Activated CD4-positive, alpha-beta T cell treated with anti-CD3 and anti-CD28 coated beads, Interleukin-2, amount 10 ng/mL, durations not matched to agents 24 days and 14 days (primary cell): ENCODE measurements at regions of chr5 and their contacts with region 1.

Region 1: GRCh38 chr5:63963080-63963735 is 963 bp upstream of the HTR1A start:
- DNase-seq: peak; percentile 82
- H3K4me3 Mint-ChIP-seq: no peak overlapping the region
- H3K27ac Mint-ChIP-seq: no peak overlapping the region
- H3K4me1 Mint-ChIP-seq: no peaks in the 10 kb centered on the region
- H3K27me3 Mint-ChIP-seq: peaks cover 14% of the 10 kb centered on the region

Region 2: DNA sequence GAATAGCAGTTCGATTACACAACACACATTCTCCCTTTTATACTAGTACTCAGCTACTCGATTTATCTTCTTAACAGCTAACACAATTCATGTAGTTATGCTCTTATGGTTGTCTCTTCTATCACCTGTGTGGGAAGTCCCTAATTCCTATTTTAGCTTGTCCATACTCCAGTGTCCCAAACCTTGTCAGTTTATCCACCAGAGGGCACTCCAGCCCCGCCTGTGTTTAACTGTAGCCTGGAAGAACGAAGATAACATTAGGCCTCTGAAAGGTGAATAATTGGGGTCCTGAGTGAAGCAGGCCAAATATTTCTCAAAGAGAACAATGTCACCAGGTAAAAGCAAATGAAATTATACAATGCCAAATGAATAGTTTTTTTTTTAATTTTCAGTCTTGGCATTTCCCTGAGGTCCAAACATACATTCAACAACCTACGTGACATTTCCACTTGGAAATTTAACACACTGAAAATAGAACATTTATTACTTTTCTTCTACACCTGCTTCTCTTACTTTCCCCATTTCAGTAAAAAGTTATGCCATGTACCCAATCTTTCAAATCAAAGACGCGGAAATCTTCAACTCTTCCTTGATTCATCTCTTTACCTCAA is 561.7 kb before region 1 on chr5:
- intact Hi-C with region 1: loop called (anchors 5 kb)
- DNase-seq: peak; percentile 73
- H3K4me3 Mint-ChIP-seq: no peak overlapping the region
- H3K27ac Mint-ChIP-seq: no peak overlapping the region
- H3K4me1 Mint-ChIP-seq: no peaks in the 10 kb centered on the region
- H3K27me3 Mint-ChIP-seq: no peaks in the 10 kb centered on the region